ENCODE measurements at regions of chrX and their contacts with region 1.

Region 1: DNA sequence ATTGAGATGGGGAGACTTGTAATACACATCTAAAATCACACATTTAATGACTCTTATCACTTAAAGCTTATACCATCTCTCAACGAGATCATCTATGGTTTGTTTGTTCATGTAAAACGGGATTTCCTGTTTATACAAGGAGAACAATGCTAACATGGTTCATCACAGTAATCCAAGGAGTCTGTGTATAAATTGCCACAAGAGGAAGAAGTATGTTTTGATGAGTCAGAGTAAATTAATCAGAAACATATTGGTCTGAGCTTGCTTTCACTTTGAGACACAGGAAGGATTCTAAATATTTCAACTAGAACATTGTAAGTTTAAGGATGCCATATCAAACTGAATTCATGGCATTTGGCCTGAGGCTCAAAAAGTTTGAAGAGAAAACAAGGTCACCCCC is 594.1 kb downstream of the GLUD2 start:
- DNase-seq: no peak
- H3K4me3 Mint-ChIP-seq: no peak overlapping the region
- H3K27ac Mint-ChIP-seq: peak overlapping the region; percentile 79
- H3K4me1 Mint-ChIP-seq: peaks cover 23% of the 10 kb centered on the region
- H3K27me3 Mint-ChIP-seq: no peaks in the 10 kb centered on the region
- CTCF ChIP-seq: no peak

Region 2: GRCh38 chrX:121598356-121598755 is 43.2 kb before region 1 on chrX:
- CTCF ChIA-PET with region 1: no interaction called
- intact Hi-C with region 1: loop called (anchors 5 kb)
- DNase-seq: peak; percentile 9
- H3K4me3 Mint-ChIP-seq: peak overlapping the region; percentile 17
- H3K27ac Mint-ChIP-seq: peak overlapping the region; percentile 85
- H3K4me1 Mint-ChIP-seq: peaks cover 25% of the 10 kb centered on the region
- H3K27me3 Mint-ChIP-seq: no peaks in the 10 kb centered on the region
- CTCF ChIP-seq: no peak

Region 3: GRCh38 chrX:121831601-121832000 is 190.0 kb after region 1 on chrX:
- CTCF ChIA-PET with region 1: no interaction called
- intact Hi-C with region 1: no loop called
- DNase-seq: no peak
- H3K4me3 Mint-ChIP-seq: no peak overlapping the region
- H3K27ac Mint-ChIP-seq: no peak overlapping the region
- H3K4me1 Mint-ChIP-seq: peaks cover 13% of the 10 kb centered on the region
- H3K27me3 Mint-ChIP-seq: no peaks in the 10 kb centered on the region
- CTCF ChIP-seq: no peak

Measured in Calu3 (cell line).